Posterior vena cava (tissue), 2 donors: ENCODE measurements at regions of chr3 and their contacts with region 1.

Region 1: GRCh38 chr3:137202941-137203340 is 245.2 kb downstream of the IL20RB start:
- DNase-seq: no peak

Region 2: GRCh38 chr3:137259701-137260100 is 56.8 kb after region 1 on chr3:
- intact Hi-C with region 1: loop called in 1 of 2 experiments (anchors 2 kb)
- DNase-seq: no peak